ENCODE measurements at regions of chr4 and their contacts with region 1.

Region 1: GRCh38 chr4:139279760-139280620 is at the start of gene MGARP:
- DNase-seq: no peak
- ATAC-seq: peak; percentile 91
- H3K4me3 ChIP-seq: peak within 1 kb of the TSS; percentile 45 to 51
- H3K27ac ChIP-seq: no peak within 1 kb of the TSS
- H3K4me1 ChIP-seq: 0 out of 2 replicates have a peak, but pooled peaks cover 2% of the 10 kb centered on the region
- H3K27me3 ChIP-seq: no peaks in the 10 kb centered on the region
- CTCF ChIP-seq: no peak
- total RNA-seq, gene MGARP: 2.3 TPM

Region 2: GRCh38 chr4:139184129-139184528 is 95.9 kb before region 1 on chr4:
- CTCF ChIA-PET with region 1: no interaction called
- POLR2A ChIA-PET with region 1: no interaction called
- in situ Hi-C with region 1: no loop called
- intact Hi-C with region 1: loop called (anchors 5 kb)
- DNase-seq: no peak
- ATAC-seq: peak; percentile 72; the same call in 1 of the 2 replicates
- H3K4me3 ChIP-seq: no peak overlapping the region
- H3K27ac ChIP-seq: no peak overlapping the region
- H3K4me1 ChIP-seq: no peaks in the 10 kb centered on the region
- H3K27me3 ChIP-seq: no peaks in the 10 kb centered on the region
- CTCF ChIP-seq: no peak; the same call in 1 of the 2 replicates

Region 3: GRCh38 chr4:139229534-139230039 is 50.4 kb before region 1 on chr4:
- CTCF ChIA-PET with region 1: no interaction called
- POLR2A ChIA-PET with region 1: no interaction called
- in situ Hi-C with region 1: no loop called
- intact Hi-C with region 1: loop called (anchors 10 kb)
- DNase-seq: no peak
- ATAC-seq: peak; percentile 82
- H3K4me3 ChIP-seq: no peak overlapping the region
- H3K27ac ChIP-seq: no peak overlapping the region
- H3K4me1 ChIP-seq: no peaks in the 10 kb centered on the region
- H3K27me3 ChIP-seq: no peaks in the 10 kb centered on the region
- CTCF ChIP-seq: peak; percentile 70; the same call in 1 of the 2 replicates

Region 4: GRCh38 chr4:139295206-139295941 is 15.4 kb after region 1 on chr4:
- CTCF ChIA-PET with region 1: interaction called, 10 read pairs
- POLR2A ChIA-PET with region 1: interaction called, 3 read pairs
- in situ Hi-C with region 1: no loop called
- intact Hi-C with region 1: no loop called
- DNase-seq: peak; percentile 64
- ATAC-seq: peak; percentile 98
- H3K4me3 ChIP-seq: peak overlapping the region; percentile 71 to 90
- H3K27ac ChIP-seq: peak overlapping the region; percentile 90
- H3K4me1 ChIP-seq: peaks cover 11% of the 10 kb centered on the region; the same call in 1 of the 2 replicates
- H3K27me3 ChIP-seq: no peaks in the 10 kb centered on the region
- CTCF ChIP-seq: peak; percentile 91

Measured in Panc1 (cell line).